ENCODE measurements at regions of chr7 and their contacts with region 1.

Region 1: GRCh38 chr7:80392229-80393169 is 119.4 kb downstream of the GNAT3 start:
- DNase-seq: no peak
- H3K4me3 ChIP-seq: no peak overlapping the region
- H3K27ac ChIP-seq: no peak overlapping the region
- H3K4me1 ChIP-seq: no peaks in the 10 kb centered on the region
- H3K27me3 ChIP-seq: no peaks in the 10 kb centered on the region
- CTCF ChIP-seq: peak; percentile 53 to 68 (median 59)
- EP300 ChIP-seq: no peak
- POLR2A ChIP-seq: no peak

Region 2: DNA sequence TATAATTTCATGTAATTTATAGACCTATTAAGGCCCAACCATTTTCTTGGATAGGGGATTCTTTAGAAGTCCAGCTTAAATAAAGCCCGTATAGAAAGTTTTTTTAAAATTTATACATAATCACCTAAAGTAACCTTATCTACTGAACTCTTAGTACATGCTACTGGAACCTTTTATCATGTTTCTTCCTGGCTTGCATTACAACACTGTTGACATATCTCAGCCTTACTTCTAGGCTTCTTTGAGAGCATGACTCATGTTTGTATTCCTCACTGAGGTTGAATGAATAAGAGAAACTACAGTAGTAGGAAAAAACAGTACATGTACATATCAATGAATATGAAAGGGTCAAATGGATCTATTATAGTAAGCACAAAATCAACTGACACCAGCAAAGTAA is 930.8 kb before region 1 on chr7:
- in situ Hi-C with region 1: no loop called
- intact Hi-C with region 1: no loop called
- DNase-seq: no peak
- H3K4me3 ChIP-seq: no peak overlapping the region
- H3K27ac ChIP-seq: no peak overlapping the region
- H3K4me1 ChIP-seq: no peaks in the 10 kb centered on the region
- H3K27me3 ChIP-seq: no peaks in the 10 kb centered on the region
- CTCF ChIP-seq: no peak
- EP300 ChIP-seq: no peak
- POLR2A ChIP-seq: no peak

Region 3: DNA sequence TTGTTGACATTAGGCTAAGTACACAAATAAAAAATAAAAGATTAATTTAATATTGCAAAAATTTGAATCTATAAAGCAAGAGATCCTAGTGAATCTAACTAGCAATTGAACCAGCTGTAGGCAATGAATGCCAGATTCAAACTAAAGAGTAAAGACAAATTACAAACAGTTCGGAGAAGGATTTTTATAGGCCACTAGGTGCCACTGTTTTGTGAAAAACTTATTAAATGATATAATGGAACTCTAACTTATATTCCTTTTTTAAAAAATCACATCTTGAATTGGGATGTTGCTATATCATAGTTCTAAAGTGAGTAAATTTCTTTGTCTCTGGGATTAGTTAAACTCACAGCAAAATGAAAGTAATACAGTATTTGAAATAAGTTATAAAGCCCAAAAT is 297.0 kb before region 1 on chr7:
- in situ Hi-C with region 1: loop called (anchors 10 to 25 kb)
- intact Hi-C with region 1: loop called (anchors 10 kb)
- DNase-seq: no peak
- H3K4me3 ChIP-seq: no peak overlapping the region
- H3K27ac ChIP-seq: no peak overlapping the region
- H3K4me1 ChIP-seq: no peaks in the 10 kb centered on the region
- H3K27me3 ChIP-seq: no peaks in the 10 kb centered on the region
- CTCF ChIP-seq: peak; percentile 33 to 55 (median 43)
- EP300 ChIP-seq: no peak
- POLR2A ChIP-seq: no peak

Region 4: DNA sequence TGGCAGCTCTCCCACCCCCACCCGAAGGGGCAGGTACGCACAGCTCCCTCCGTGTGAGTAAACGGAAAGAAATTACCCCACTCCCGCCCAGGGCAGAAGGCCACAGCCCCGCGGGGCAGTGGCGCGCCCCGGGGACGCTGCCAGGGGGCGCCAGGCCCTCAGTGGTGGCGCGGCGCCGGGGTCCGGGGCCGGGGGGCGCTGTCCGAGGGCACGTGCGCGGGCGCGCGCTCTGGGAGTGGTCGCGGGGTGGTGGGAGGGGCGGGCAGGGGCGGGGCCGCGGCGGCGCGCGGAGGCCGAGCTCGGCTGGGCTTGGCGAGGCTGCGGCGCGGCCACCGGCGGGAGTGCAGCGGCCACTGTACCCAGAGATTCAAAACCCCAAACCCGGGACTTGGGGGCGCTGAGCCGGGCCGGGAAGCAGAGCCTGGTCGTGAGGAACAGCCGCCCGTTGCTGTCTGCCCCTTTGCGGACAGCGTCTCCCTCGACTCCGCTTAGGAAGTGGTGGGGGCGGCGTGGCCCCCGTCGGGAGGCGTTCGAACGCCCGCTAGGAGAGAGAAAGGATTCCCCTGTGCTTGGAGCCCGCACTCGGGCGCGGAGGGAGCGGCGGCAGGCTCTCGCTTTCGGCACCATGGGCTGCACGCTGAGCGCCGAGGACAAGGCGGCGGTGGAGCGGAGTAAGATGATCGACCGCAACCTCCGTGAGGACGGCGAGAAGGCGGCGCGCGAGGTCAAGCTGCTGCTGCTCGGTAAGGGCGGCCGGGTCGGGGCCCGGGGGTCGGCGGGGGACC is 257.8 kb before region 1 on chr7 and contains the start of gene GNAI1:
- in situ Hi-C with region 1: loop called in 1 of 4 experiments (anchors 10 kb)
- intact Hi-C with region 1: loop called (anchors 10 kb)
- DNase-seq: peak; percentile 62
- H3K4me3 ChIP-seq: peak within 1 kb of the TSS; percentile 79 to 98 (median 87)
- H3K27ac ChIP-seq: peak within 1 kb of the TSS; percentile 88 to 97 (median 94)
- H3K4me1 ChIP-seq: peaks cover 6 to 49% (median 21%) of the 10 kb centered on the region in 4 donors
- H3K27me3 ChIP-seq: no peaks in the 10 kb centered on the region
- CTCF ChIP-seq: peak in 3 of 5 experiments; percentile 27 to 31 (median 30)
- EP300 ChIP-seq: no peak
- POLR2A ChIP-seq: peak; percentile 56
- total RNA-seq, gene GNAI1: 3.0 to 46.0 (median 37.4) TPM

Region 5: GRCh38 chr7:80288175-80289122 is 104.0 kb before region 1 on chr7:
- in situ Hi-C with region 1: loop called in 1 of 4 experiments (anchors 25 kb)
- intact Hi-C with region 1: no loop called
- DNase-seq: no peak
- H3K4me3 ChIP-seq: no peak overlapping the region
- H3K27ac ChIP-seq: no peak overlapping the region
- H3K4me1 ChIP-seq: no peaks in the 10 kb centered on the region
- H3K27me3 ChIP-seq: no peaks in the 10 kb centered on the region
- CTCF ChIP-seq: no peak
- EP300 ChIP-seq: no peak
- POLR2A ChIP-seq: no peak